Ovary (tissue), 10 donors: ENCODE measurements at regions of chrX and their contacts with region 1.

Region 1: DNA sequence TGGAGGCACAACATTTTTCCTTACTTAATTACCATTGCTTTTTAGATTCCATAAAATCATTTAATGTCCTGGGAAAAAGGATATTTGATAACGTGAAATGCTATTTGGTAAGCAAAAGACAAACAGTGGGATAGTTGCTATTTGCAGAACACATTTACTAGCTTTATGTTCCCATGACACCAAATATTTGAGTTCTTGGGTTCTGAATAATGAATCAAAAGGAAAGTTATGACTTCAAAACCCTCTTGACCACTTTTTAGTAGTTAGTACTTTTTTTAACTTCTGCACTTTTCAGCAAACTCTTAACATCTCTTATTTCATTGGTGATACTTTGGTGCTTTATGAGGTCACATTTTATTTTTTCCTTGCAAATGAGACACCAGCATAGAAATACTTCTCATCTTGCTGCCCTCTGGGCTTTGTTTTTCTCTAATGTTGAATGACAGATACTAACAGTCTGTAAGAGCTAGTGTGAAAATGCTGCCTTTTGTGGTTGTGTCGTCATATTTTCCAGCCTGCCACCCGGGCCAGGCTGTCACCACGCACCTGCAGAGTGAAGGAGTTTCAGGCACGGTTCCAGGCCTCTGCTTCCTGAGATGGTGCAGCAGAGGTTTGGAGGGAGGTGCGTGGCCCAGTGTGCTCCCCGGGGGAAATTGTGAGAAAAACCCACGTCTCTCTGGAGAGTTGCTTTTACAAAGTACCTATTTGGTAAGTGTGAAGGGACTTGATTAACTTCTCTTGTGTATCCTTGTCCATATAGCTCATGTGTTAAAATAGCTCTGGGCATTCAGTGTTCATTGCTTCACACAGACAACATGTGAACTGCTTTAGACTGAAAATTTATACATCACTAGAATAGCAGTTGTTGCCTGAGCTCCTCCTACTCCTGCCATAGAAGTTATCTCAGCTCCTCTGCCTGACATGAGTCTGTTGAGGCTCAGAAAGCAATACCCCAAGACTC is 34.7 kb downstream of the MSL3 start:
- DNase-seq: no peak
- H3K4me3 ChIP-seq: no peak overlapping the region
- H3K27ac ChIP-seq: no peak overlapping the region
- H3K4me1 ChIP-seq: no peaks in the 10 kb centered on the region
- H3K27me3 ChIP-seq: no peaks in the 10 kb centered on the region
- CTCF ChIP-seq: no peak
- EP300 ChIP-seq: no peak
- POLR2A ChIP-seq: no peak

Region 2: GRCh38 chrX:12901486-12901885 is 1108.7 kb after region 1 on chrX:
- intact Hi-C with region 1: loop called in 1 of 4 experiments (anchors 10 kb)
- DNase-seq: peak; percentile 34 to 74 (median 56)
- H3K4me3 ChIP-seq: no peak overlapping the region
- H3K27ac ChIP-seq: no peak overlapping the region
- H3K4me1 ChIP-seq: no peaks in the 10 kb centered on the region
- H3K27me3 ChIP-seq: no peaks in the 10 kb centered on the region
- CTCF ChIP-seq: peak in 2 of 3 donors; percentile 28 to 39
- EP300 ChIP-seq: no peak
- POLR2A ChIP-seq: no peak